Endothelial cell of umbilical vein (primary cell): ENCODE measurements at regions of chr10 and their contacts with region 1.

Region 1: GRCh38 chr10:120221873-120222485 is 235.0 kb upstream of the PLPP4 start:
- DNase-seq: peak; percentile 64
- H3K4me3 ChIP-seq: no peak overlapping the region
- H3K27ac ChIP-seq: no peak overlapping the region
- H3K4me1 ChIP-seq: no peaks in the 10 kb centered on the region
- H3K27me3 ChIP-seq: no peaks in the 10 kb centered on the region
- CTCF ChIP-seq: peak; percentile 64 to 65
- POLR2A ChIP-seq: no peak

Region 2: DNA sequence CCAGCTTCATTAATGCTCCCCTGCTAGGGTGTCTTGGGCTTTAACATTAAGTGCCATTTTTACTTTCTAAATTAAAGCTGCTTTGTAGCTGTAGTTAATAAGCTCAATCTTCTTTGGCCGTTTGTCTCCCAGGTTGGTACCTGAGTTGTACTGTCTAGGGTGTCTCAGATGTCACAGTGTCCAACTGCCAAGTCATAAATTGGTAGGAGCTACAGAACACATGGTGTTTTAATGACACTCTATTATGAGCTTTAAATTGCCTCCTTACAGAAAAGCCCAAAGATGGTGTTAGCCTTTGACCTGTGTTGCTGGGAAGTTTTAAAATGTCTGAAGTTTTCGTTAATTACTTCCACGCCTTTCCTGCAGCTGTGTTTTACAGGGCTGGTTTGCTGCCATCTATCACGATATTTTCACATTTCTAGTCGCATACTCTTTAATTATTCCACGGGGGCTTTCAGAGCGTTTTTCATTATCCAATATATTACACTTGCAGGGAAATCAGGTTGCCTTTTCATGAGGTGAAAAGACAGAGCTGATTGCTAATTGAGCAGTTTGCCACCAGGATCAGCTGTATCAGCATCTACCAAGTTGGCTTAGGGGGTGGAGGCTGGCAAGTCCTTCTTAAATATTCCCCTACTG is 12.7 kb before region 1 on chr10:
- CTCF ChIA-PET with region 1: interaction called, 15 read pairs
- POLR2A ChIA-PET with region 1: no interaction called
- dilution Hi-C with region 1: no loop called
- intact Hi-C with region 1: no loop called
- DNase-seq: no peak
- H3K4me3 ChIP-seq: no peak overlapping the region
- H3K27ac ChIP-seq: no peak overlapping the region
- H3K4me1 ChIP-seq: no peaks in the 10 kb centered on the region
- H3K27me3 ChIP-seq: no peaks in the 10 kb centered on the region
- CTCF ChIP-seq: no peak
- POLR2A ChIP-seq: no peak

Region 3: GRCh38 chr10:120600871-120601649 is 379.1 kb after region 1 on chr10:
- CTCF ChIA-PET with region 1: interaction called, 6 read pairs
- POLR2A ChIA-PET with region 1: no interaction called
- dilution Hi-C with region 1: no loop called
- intact Hi-C with region 1: loop called (anchors 2 kb)
- DNase-seq: peak; percentile 47
- H3K4me3 ChIP-seq: no peak overlapping the region
- H3K27ac ChIP-seq: no peak overlapping the region
- H3K4me1 ChIP-seq: peaks cover 5% of the 10 kb centered on the region
- H3K27me3 ChIP-seq: no peaks in the 10 kb centered on the region
- CTCF ChIP-seq: peak; percentile 51 to 71
- POLR2A ChIP-seq: no peak

Region 4: GRCh38 chr10:120850911-120851865 is 629.2 kb after region 1 on chr10 and contains the start of gene WDR11:
- CTCF ChIA-PET with region 1: interaction called, 6 read pairs
- POLR2A ChIA-PET with region 1: no interaction called
- dilution Hi-C with region 1: no loop called
- intact Hi-C with region 1: loop called (anchors 5 kb)
- DNase-seq: peak; percentile 88
- H3K4me3 ChIP-seq: peak within 1 kb of the TSS; percentile 42 to 92 (median 87)
- H3K27ac ChIP-seq: peak within 1 kb of the TSS; percentile 64
- H3K4me1 ChIP-seq: peaks cover 11% of the 10 kb centered on the region
- H3K27me3 ChIP-seq: no peaks in the 10 kb centered on the region
- CTCF ChIP-seq: no peak
- POLR2A ChIP-seq: peak; percentile 95
- total RNA-seq, gene WDR11: 58.9 and 73.9 TPM in 2 replicates